ENCODE measurements at regions of chr7 and their contacts with region 1.

Region 1: GRCh38 chr7:876167-876967 is at the start of gene GET4:
- DNase-seq: peak; percentile 97
- H3K4me3 ChIP-seq: peak within 1 kb of the TSS; percentile 81 to 90
- H3K27ac ChIP-seq: peak within 1 kb of the TSS; percentile 83 to 84
- H3K4me1 ChIP-seq: no peaks in the 10 kb centered on the region
- H3K27me3 ChIP-seq: no peaks in the 10 kb centered on the region
- CTCF ChIP-seq: peak in 3 of 4 experiments; percentile 16 to 57 (median 42)
- POLR2A ChIP-seq: peak; percentile 88
- total RNA-seq, gene GET4: 50.0 to 91.9 TPM

Region 2: DNA sequence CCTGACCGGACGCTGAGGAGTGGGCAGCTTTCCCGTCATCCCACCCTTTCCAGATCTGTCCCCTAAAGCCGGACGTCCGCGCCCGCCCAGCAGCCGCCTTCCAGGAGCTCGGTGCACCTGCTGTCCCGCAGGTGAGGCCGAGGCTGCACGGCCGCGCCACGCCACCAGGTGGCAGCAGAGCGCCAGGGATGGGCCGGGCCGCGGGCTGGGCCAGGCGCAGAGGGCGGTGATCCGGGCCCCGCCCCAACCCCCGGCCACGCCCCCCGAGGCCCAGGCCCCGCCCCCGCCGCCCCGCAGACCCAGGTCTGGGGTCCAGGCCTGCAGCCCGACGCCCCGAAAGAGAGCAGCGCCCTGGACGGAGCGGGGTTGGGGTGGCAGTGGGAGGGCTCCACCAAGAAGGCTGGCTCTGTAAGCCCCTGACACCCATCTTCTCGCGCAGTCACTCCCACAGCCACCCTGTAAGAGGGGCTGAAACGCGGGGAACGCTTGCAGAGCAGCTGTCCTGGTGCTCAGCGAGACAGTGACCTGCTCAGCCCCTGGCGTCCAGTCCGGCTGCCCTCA is 554.2 kb before region 1 on chr7:
- intact Hi-C with region 1: loop called (anchors 10 kb)
- DNase-seq: peak; percentile 69
- H3K4me3 ChIP-seq: no peak overlapping the region
- H3K27ac ChIP-seq: no peak overlapping the region
- H3K4me1 ChIP-seq: peaks cover 6% of the 10 kb centered on the region
- H3K27me3 ChIP-seq: no peaks in the 10 kb centered on the region
- CTCF ChIP-seq: peak; percentile 93 to 99 (median 97)
- POLR2A ChIP-seq: no peak

Region 3: GRCh38 chr7:786472-787255 is 89.7 kb before region 1 on chr7:
- intact Hi-C with region 1: loop called (anchors 2 kb)
- DNase-seq: peak; percentile 61
- H3K4me3 ChIP-seq: no peak overlapping the region
- H3K27ac ChIP-seq: no peak overlapping the region
- H3K4me1 ChIP-seq: no peaks in the 10 kb centered on the region
- H3K27me3 ChIP-seq: no peaks in the 10 kb centered on the region
- CTCF ChIP-seq: peak; percentile 84 to 89 (median 86)
- POLR2A ChIP-seq: no peak

Region 4: GRCh38 chr7:836411-837400 is 39.7 kb before region 1 on chr7:
- intact Hi-C with region 1: loop called (anchors 5 kb)
- DNase-seq: no peak
- H3K4me3 ChIP-seq: no peak overlapping the region
- H3K27ac ChIP-seq: peak overlapping the region in 1 of 2 donors; percentile 22
- H3K4me1 ChIP-seq: peaks cover 6% of the 10 kb centered on the region
- H3K27me3 ChIP-seq: no peaks in the 10 kb centered on the region
- CTCF ChIP-seq: peak in 3 of 4 experiments; percentile 28 to 46 (median 33)
- POLR2A ChIP-seq: no peak

Measured in prostate gland (tissue), 2 donors.